ENCODE measurements at regions of chr5 and their contacts with region 1.

Region 1: DNA sequence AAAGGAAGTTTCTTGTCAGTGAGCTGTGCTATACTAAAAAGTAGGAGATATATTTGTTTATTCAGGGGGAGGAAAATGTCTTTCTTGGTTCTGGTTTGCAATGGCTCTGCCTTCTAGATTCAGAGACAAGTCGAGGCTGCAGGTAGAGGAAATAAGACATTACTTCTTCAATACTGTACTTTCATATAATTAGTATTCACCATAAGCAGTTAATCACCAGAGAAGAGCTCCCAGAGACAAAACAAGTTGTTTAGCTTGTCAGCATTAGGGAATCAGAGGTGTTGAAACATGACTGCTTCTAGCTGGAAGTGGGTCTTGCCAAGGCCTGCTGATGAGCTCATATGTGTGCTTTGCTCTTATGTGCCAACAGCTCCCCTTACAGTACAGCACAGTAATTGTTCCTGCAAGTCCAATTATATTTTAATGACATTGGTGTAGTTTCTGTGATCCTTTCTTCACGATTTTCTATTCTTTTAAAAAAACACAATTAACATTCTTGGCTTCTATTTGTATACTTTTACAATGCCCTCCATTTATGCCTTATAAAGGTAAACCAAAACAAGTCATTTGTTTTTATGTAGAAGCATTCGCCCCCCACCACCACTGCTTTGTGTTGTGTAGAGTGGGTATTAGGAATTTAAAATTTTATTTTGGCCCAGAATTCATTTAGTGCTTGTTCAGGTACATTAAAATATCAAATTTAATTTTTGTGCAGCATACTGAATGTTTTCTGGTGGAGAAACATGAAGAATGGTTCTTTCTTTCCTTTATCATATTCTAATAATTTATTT is 112.2 kb downstream of the RPS23 start:
- DNase-seq: peak; percentile 71

Region 2: GRCh38 chr5:81856948-81857928 is 308.7 kb before region 1 on chr5:
- CTCF ChIA-PET with region 1: interaction called, 15 read pairs
- POLR2A ChIA-PET with region 1: interaction called, 4 read pairs
- DNase-seq: peak; percentile 36

Region 3: DNA sequence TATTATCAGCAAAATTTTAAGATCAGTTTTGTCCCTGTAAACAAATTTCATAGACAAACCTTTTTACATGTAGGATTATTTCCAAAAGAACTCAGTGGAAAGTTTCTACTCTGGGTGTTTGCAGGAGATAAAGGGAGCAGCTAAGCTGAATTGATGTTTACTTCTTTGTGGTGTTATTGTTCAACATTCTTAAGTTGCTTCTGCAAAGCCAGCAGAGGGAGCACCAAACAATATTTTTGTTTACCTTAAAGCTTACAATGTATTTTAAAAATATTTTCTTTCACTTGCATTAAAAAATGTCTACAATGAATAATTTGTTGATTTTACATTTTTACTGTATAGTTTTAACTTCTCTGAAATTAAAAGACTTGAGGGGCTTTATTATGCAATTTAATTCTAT is 58.7 kb before region 1 on chr5:
- CTCF ChIA-PET with region 1: interaction called, 11 read pairs
- POLR2A ChIA-PET with region 1: no interaction called
- DNase-seq: no peak

Region 4: GRCh38 chr5:82204567-82204966 is 38.6 kb after region 1 on chr5:
- CTCF ChIA-PET with region 1: no interaction called
- POLR2A ChIA-PET with region 1: no interaction called
- DNase-seq: no peak

Region 5: DNA sequence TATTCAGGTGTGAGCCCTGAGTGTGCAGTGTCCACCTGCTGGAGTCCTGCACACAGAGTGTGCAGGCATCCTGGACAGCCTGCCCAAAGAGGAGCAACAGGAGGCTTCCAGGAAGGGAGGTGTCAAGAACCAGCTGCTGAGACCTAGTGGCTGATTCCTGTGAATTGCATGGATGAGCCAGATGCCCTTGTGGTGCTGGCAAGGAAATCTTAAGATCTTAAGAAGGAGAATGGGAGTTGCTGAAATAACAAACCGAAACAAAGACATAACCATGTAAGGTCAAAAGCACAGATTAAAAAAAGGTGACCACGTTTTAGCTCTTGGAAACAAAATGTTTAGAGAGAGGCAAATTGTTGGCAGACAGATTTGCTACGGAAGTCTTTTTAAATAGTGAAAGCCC is 141.5 kb after region 1 on chr5:
- CTCF ChIA-PET with region 1: no interaction called
- POLR2A ChIA-PET with region 1: no interaction called
- DNase-seq: no peak